AG04450 (cell line): ENCODE measurements at regions of chr12 and their contacts with region 1.

Region 1: DNA sequence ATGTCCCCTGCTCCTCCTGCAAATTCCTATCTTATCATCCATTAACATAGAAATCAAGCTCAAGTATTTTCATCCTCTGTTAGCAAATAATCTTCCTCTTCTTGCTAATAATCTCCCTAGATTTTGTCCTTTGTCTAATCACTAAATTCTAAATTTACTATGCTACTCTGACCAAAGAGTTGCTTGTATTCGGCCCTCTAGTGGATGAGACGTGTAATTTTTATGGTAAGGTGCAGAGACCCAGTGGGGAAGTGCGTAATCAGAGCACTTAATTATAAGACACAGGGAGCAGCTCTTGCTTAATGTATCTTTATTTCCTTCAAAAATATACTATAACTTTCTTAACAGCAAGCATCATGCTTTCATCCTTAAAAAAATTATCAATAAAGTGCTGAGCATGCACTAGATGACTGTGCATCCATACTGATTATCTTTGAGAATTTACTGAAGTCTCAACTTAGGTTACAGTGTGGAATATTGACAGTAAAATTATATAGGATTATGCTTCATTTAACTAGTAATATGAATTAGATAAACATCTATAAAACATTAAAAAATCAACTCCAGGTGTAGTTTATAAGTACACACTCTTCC is 212.6 kb downstream of the SLC16A7 start:
- DNase-seq: no peak
- H3K4me3 ChIP-seq: no peak overlapping the region
- H3K27ac ChIP-seq: no peak overlapping the region
- H3K27me3 ChIP-seq: no peaks in the 10 kb centered on the region
- CTCF ChIP-seq: peak; percentile 83

Region 2: DNA sequence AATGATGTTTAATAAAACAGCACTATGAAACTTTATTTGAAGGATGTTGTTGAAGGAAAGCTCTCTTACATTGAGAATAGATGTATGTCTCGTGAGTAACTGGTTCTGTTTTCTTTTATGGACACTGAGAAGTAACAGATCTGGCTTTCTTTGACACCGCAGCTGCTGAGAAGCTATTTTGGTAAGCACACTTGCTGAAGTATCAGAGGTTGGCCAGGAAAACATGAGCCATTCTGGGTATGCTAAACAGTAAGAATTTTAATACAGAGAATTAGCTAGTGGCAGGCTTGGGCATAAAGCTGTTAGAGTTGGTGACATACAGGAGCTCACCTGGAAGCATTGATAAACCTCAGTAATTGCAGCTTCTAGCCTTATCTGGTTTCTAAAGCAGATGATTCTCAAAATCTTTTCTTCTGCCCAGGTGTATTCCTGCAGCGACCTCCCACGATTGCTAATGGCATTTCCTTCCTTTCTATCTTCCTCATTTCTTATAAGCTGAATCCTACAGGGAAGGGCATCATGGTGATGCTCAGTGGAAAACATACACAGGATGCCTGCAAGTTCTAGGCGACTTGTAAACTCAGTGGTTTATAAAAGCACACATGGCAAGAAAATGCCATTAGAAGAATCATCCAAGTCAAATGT is 504.2 kb before region 1 on chr12:
- CTCF ChIA-PET with region 1: no interaction called
- POLR2A ChIA-PET with region 1: no interaction called
- DNase-seq: no peak
- H3K4me3 ChIP-seq: no peak overlapping the region
- H3K27ac ChIP-seq: no peak overlapping the region
- H3K27me3 ChIP-seq: no peaks in the 10 kb centered on the region
- CTCF ChIP-seq: no peak

Region 3: GRCh38 chr12:59403259-59403932 is 405.0 kb before region 1 on chr12:
- CTCF ChIA-PET with region 1: interaction called, 29 read pairs
- POLR2A ChIA-PET with region 1: no interaction called
- DNase-seq: peak; percentile 52
- H3K4me3 ChIP-seq: peak overlapping the region; percentile 40
- H3K27ac ChIP-seq: no peak overlapping the region
- H3K27me3 ChIP-seq: no peaks in the 10 kb centered on the region
- CTCF ChIP-seq: peak; percentile 91

Region 4: DNA sequence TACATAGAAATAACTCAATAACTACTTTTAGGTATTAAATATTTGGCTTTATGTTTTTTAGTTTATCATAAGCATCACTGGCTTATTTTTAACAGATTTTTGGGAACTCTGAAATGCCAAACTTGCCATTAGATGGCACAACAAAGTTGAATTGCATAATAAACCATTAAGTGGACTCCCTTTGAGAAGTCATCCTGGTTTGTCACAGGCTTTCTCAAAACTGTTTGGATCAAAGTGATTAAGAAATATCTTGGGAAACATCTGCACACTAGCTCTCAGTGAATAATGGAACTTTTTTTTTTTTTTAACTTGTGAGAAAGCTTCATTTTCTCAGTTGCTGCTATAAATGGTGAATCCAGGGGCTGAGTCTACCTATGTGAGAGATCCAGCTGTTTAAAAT is 208.2 kb before region 1 on chr12:
- CTCF ChIA-PET with region 1: interaction called, 10 read pairs
- POLR2A ChIA-PET with region 1: no interaction called
- DNase-seq: no peak
- H3K4me3 ChIP-seq: no peak overlapping the region
- H3K27ac ChIP-seq: no peak overlapping the region
- H3K27me3 ChIP-seq: no peaks in the 10 kb centered on the region
- CTCF ChIP-seq: no peak

Region 5: GRCh38 chr12:59820594-59821011 is 12.2 kb after region 1 on chr12:
- CTCF ChIA-PET with region 1: interaction called, 27 read pairs
- POLR2A ChIA-PET with region 1: no interaction called
- DNase-seq: peak; percentile 26
- H3K4me3 ChIP-seq: no peak overlapping the region
- H3K27ac ChIP-seq: peak overlapping the region; percentile 42
- H3K27me3 ChIP-seq: no peaks in the 10 kb centered on the region
- CTCF ChIP-seq: no peak